ENCODE measurements at regions of chr10 and their contacts with region 1.

Region 1: DNA sequence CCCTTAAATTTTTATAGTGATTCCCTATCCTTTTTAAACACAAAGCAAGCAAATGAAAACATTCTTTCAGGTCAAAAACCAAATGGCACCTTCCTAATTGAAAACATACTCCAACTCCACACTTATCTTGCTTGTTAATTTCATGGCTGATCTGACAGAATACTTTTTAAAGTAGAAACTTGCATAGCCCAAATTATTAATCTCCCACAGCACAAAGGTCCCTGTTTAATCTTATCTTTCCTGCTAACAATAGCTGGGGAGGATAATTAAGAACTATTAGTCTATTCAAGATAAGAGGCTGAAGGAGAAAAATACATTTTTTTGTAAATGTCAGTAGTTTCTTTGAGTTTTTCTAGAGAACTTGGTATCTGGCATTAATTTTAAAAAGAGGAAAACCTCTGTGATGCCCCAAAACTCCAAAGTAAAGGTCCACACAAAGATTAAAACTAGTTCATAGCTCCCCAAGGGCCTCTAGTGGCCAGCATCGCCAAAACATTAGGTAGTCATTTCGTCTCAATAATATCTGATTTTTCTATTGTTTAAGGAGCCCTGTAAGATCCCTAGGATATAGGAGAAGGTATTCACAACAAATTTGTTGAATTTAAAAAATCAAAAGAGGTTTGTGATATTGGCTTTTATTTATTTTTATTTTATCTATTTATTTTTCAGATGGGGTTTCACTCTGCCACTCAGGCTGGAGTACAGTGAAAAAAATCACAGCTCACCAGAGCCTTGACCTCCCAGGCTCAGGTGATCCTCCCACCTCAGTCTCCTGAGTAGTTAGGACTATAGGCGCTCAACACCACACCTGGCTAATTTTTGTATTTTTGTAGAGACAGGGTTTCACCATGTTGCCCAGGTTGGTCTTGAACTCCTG is 14.7 kb downstream of the CDNF start:
- DNase-seq: peak in 1 of 3 donors; percentile 71
- ATAC-seq: peak; percentile 45
- H3K4me3 ChIP-seq: no peak overlapping the region
- H3K4me1 ChIP-seq: no peaks in the 10 kb centered on the region
- CTCF ChIP-seq: peak; percentile 19

Region 2: GRCh38 chr10:14536241-14537213 is 286.6 kb before region 1 on chr10:
- intact Hi-C with region 1: loop called (anchors 5 to 10 kb)
- DNase-seq: peak; percentile 74 to 93 (median 85)
- ATAC-seq: peak; percentile 66
- H3K4me3 ChIP-seq: no peak overlapping the region
- H3K4me1 ChIP-seq: peaks cover 19% of the 10 kb centered on the region
- CTCF ChIP-seq: peak; percentile 52

Measured in mucosa of descending colon (tissue), 3 donors.